IMR-90 (cell line): ENCODE measurements at regions of chr16 and their contacts with region 1.

Region 1: DNA sequence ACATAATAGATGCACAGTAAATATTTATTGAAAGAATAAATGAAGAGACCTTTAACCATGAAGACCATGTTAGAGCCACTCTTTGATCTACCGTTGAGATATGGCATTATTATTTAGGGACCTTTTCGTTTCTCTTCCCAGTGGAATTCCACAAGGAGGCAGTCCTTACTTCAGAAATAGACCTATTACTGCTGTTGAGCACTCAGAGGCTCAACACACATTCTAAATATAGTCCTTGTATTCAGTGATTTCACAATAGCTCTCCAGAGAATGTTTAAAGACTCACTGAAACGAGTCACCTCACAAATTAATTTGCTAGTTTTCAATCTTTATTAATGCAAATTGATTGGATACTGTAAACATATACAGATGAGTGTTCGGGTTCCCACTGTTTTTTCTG is 603.8 kb downstream of the CDH8 start:
- DNase-seq: no peak
- ATAC-seq: no peak
- H3K4me3 ChIP-seq: no peak overlapping the region
- H3K27ac ChIP-seq: no peak overlapping the region
- H3K4me1 ChIP-seq: no peaks in the 10 kb centered on the region
- H3K27me3 ChIP-seq: no peaks in the 10 kb centered on the region
- CTCF ChIP-seq: no peak
- POLR2A ChIP-seq: no peak
- RAD21 ChIP-seq: no peak

Region 2: DNA sequence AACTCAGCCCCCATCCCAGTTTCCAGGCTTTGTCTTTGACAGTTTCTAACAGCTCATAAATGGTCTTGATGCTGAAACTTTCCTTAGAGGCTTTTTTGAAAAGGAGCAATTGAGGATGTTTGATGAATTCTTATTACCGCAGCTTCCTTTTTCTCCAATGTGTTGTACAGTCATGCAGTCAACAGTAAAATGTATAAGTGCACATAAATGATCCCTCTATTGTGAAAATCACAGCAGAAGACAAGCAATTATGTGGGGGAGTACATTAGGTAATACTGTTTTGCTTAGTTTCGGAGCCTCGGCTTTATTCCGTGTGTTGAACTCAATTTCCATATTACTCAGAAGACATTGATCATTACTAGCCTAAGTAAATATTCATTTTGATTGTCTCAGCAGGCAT is 69.8 kb before region 1 on chr16:
- CTCF ChIA-PET with region 1: no interaction called
- POLR2A ChIA-PET with region 1: no interaction called
- dilution Hi-C with region 1: no loop called
- in situ Hi-C with region 1: no loop called
- intact Hi-C with region 1: loop called (anchors 10 kb)
- DNase-seq: no peak
- ATAC-seq: no peak
- H3K4me3 ChIP-seq: no peak overlapping the region
- H3K27ac ChIP-seq: no peak overlapping the region
- H3K4me1 ChIP-seq: no peaks in the 10 kb centered on the region
- H3K27me3 ChIP-seq: no peaks in the 10 kb centered on the region
- CTCF ChIP-seq: no peak
- POLR2A ChIP-seq: no peak
- RAD21 ChIP-seq: no peak

Region 3: GRCh38 chr16:61382435-61382834 is 50.0 kb before region 1 on chr16:
- CTCF ChIA-PET with region 1: no interaction called
- POLR2A ChIA-PET with region 1: no interaction called
- dilution Hi-C with region 1: no loop called
- in situ Hi-C with region 1: no loop called
- intact Hi-C with region 1: no loop called
- DNase-seq: no peak
- ATAC-seq: no peak
- H3K4me3 ChIP-seq: no peak overlapping the region
- H3K27ac ChIP-seq: no peak overlapping the region
- H3K4me1 ChIP-seq: no peaks in the 10 kb centered on the region
- H3K27me3 ChIP-seq: no peaks in the 10 kb centered on the region
- CTCF ChIP-seq: no peak
- POLR2A ChIP-seq: no peak
- RAD21 ChIP-seq: no peak

Region 4: DNA sequence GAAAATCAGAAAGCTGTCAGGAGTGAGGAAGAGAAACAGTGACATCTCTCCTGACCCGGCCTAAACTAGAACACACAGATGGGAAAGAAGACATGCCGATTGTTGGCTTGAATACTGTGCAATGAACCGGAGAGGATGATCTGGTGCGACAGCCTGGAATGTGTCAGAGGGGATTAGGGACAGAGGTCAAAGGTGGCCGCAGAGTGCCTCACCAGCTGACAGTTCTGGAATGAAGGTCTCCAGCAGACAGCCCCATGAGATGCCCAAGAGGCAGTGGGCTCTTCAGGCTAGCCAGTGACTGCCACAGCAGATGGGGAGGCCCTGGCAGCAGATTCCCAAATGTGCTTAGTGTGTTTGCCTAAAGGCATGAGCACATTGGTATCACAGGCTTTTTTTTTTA is 19.4 kb before region 1 on chr16:
- CTCF ChIA-PET with region 1: no interaction called
- POLR2A ChIA-PET with region 1: no interaction called
- dilution Hi-C with region 1: no loop called
- in situ Hi-C with region 1: no loop called
- intact Hi-C with region 1: no loop called
- DNase-seq: no peak
- ATAC-seq: no peak
- H3K4me3 ChIP-seq: no peak overlapping the region
- H3K27ac ChIP-seq: no peak overlapping the region
- H3K4me1 ChIP-seq: no peaks in the 10 kb centered on the region
- H3K27me3 ChIP-seq: no peaks in the 10 kb centered on the region
- CTCF ChIP-seq: no peak
- POLR2A ChIP-seq: no peak
- RAD21 ChIP-seq: no peak